ENCODE measurements at regions of chr17 and their contacts with region 1.

Region 1: DNA sequence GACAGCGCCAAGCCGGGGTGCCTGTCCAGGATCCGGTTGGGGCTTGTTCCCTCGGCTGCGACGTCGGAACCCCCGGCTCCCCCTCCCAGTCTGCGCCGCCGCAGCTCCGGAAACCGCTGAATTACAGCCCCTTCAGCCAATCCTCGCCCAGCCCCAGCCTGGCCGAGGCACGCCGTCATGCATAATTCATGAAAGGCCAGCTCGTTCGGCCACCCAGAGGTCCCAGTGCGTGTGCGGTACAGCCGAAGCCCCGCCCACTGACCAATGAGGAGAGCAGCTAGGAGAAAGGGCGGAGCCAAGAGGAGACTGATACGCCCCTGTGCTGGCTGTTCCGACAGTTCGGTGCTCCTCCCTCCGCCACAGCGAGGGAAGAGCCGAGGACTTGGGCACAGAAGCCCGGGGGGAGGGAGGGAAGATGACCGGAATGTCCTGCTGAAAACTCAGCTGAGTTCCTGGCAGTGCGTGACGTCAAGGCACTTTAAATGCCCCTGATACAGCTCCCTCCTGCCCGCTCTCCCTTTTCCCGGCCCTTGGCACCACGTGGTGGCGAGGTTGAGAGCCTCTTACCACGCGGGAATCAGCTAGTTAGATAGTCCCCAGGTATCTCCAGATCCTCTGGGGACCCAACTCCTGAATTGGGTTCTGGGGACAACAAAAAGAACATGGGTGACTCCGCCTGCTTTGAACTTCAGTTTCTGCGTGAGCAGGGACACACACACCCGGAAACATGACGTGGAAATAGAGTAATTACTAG is at the start of gene STAT3:
- DNase-seq: peak; percentile 99
- H3K4me3 ChIP-seq: peak within 1 kb of the TSS; percentile 99
- H3K27me3 ChIP-seq: no peaks in the 10 kb centered on the region
- CTCF ChIP-seq: no peak
- polyA plus RNA-seq, gene STAT3: 62.0 and 74.4 TPM in 2 replicates

Region 2: DNA sequence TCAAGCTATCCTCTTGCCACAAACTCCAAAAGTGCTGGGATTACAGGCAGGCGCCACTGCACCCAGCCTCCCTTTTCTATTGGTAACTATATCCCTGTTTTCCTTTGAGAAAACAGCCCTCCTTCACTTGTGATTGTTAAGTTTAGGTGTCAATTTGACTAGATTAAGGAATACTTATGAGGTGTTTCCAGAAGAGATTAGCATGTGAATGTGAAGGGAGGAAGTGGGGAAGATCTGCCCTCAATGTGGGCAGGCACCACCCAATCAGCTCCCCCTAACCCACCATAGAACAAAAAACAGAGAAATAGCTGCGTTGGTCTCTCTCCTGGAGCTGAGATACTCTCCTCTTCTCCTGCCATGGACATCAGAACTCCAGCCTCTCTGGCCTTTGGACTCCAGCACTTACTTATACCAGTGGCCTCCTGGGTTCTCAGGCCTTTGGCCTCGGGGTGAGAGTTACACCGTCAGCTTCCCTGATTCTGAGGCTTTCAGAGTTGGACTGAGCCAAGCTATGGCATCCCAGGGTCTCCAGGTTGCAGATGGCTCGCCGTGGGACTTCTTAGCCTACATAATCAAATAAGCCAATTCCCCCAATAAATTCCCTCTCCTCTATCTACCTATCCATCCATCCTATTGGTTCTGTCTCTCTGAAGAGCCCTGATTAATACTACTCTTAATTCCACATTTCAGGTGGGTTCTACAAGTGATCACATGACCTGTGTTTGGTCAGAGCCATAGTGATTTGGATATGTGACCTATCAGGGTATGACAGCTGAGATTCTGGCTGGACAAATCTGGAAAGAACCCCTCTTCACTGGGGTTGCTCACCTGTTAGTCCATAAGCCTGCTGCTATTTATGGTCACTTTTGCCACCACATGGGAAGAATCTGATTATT is 11.6 kb after region 1 on chr17:
- CTCF ChIA-PET with region 1: interaction called, 17 read pairs
- POLR2A ChIA-PET with region 1: interaction called, 4 read pairs
- DNase-seq: no peak
- H3K4me3 ChIP-seq: no peak overlapping the region
- H3K27me3 ChIP-seq: no peaks in the 10 kb centered on the region
- CTCF ChIP-seq: no peak

Measured in BJ (cell line).